ENCODE measurements at regions of chr14 and their contacts with region 1.

Region 1: DNA sequence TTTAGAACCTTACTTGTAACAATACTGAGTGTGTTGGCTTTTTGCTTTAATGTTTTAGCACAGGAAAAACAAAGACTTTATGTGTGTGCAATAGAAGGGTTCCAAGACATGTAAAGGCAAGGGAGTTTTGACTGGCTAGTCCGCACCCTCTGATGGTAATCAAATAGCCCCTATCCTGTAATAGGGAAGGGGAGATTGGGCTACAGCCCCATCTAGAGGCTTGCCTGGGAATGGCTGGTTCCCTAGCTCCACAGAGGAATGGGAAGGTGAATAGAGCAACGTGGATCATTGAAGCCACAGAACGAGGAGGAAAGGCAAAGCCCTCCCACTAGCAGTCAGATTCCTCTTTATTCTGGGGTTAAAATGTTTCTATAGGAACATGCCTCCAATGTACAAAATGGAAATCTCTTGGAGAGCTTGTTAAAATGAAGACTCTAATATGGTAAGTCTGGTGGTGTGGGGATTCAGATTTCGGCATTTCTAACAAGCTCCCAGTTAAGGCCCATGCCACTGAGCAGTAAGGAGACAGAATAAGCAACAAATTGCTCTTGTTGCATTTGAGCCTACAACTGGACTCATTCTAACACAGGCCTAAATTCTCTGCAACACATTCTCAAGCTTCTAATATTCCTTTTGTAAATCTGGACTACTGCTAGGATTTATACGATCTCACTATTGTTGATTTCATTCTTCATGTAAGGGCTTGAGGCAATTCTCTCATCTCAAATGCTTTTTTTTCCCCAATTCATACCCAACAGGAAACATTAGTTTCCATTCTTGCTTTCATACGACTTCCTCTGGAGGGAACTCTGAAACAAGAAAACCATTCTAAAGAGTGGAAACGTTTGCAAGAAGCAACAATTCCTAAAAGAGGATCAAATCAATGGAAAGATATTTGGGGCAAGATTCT is 57.1 kb downstream of the NIN start:
- DNase-seq: peak; percentile 48
- H3K4me3 Mint-ChIP-seq: no peak overlapping the region
- H3K27ac Mint-ChIP-seq: no peak overlapping the region
- H3K4me1 Mint-ChIP-seq: peaks cover 22% of the 10 kb centered on the region
- H3K27me3 Mint-ChIP-seq: no peaks in the 10 kb centered on the region

Region 2: DNA sequence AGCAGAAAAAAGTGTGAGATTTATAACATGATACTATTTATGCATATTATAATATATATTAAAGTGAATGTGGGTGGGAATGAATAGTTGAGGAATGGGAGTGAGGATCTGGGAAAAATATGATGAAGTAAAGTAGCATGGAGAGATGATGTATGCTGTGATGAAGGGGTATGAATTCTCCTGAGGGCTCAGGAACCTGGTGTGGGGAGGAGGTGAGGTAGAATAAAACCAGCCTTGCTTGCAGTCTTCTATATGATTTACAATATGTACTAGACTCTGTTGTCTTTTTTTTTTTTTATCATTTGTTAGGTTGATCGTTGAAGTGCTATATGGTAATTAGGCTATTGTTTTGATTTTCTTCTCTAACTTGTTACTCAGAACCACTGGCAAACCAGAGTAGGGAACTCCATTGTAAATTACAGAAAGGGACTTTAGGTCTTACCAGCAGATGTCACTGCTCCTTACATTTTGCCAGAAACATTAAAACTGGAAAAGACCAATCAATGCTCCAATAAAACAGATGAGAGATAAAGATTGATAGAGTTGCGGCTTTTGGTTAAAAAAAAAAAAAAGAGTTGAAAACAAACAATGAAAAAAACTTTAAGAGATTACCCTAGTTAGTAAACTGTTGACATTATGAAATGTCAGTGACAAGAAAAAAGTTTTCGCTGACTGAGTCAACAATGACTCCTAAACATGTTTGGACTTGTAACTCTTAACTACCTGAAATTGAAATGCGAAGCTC is 174.0 kb before region 1 on chr14:
- CTCF ChIA-PET with region 1: interaction called, 39 read pairs
- DNase-seq: no peak
- H3K4me3 Mint-ChIP-seq: no peak overlapping the region
- H3K27ac Mint-ChIP-seq: no peak overlapping the region
- H3K4me1 Mint-ChIP-seq: no peaks in the 10 kb centered on the region
- H3K27me3 Mint-ChIP-seq: no peaks in the 10 kb centered on the region

Region 3: GRCh38 chr14:50631408-50631821 is 142.5 kb before region 1 on chr14:
- CTCF ChIA-PET with region 1: interaction called, 13 read pairs
- DNase-seq: no peak
- H3K4me3 Mint-ChIP-seq: no peak overlapping the region
- H3K27ac Mint-ChIP-seq: no peak overlapping the region
- H3K4me1 Mint-ChIP-seq: no peaks in the 10 kb centered on the region
- H3K27me3 Mint-ChIP-seq: no peaks in the 10 kb centered on the region

Region 4: DNA sequence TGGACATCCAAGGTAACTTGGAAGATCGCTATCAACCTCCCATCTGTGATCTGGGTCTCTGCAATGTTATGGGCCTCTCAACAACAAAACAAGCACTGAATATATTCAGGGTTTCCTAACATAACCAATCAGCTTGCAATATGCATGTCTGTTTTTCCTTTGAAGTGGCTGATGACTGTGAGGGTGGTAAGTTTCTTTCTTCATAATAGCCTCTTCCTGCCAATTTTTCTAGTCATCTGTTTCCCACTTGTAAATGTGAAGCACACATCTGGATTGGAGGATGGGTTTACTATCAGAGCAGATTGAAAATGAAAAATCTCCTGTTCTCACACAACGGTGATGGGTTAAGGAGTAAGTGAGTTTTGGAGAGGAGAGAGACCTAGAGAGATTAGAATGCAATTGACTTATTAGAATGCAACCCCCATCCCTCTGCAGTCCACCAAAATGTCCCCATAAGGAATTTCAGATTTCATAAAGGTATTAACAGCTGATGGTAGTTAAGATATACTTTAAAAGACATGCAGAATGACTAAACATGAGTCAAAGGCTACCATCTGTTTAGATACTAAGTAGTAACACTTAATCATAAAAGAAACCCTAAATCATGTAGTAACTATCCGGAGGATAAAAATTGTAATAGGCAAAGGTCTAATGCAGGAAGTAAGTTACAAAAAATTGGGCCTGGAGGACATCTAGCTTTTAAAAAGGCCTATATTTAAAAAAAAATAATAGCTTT is 47.3 kb before region 1 on chr14:
- CTCF ChIA-PET with region 1: interaction called, 12 read pairs
- DNase-seq: peak; percentile 29
- H3K4me3 Mint-ChIP-seq: peak overlapping the region; percentile 11
- H3K27ac Mint-ChIP-seq: peak overlapping the region; percentile 91
- H3K4me1 Mint-ChIP-seq: peaks cover 32% of the 10 kb centered on the region
- H3K27me3 Mint-ChIP-seq: no peaks in the 10 kb centered on the region

Region 5: GRCh38 chr14:50792051-50792477 is 18.2 kb after region 1 on chr14:
- CTCF ChIA-PET with region 1: interaction called, 12 read pairs
- DNase-seq: peak; percentile 45
- H3K4me3 Mint-ChIP-seq: peak overlapping the region; percentile 19
- H3K27ac Mint-ChIP-seq: peak overlapping the region; percentile 91
- H3K4me1 Mint-ChIP-seq: peaks cover 56% of the 10 kb centered on the region
- H3K27me3 Mint-ChIP-seq: no peaks in the 10 kb centered on the region